Activated naive CD4-positive, alpha-beta T cell treated with anti-CD3 and anti-CD28 coated beads for 36 hours (primary cell): ENCODE measurements at regions of chr4 and their contacts with region 1.

Region 1: GRCh38 chr4:122508083-122508482 is 51.6 kb upstream of the IL2 start:
- DNase-seq: no peak
- H3K4me3 Mint-ChIP-seq: peak overlapping the region; percentile 53
- H3K27ac Mint-ChIP-seq: peak overlapping the region; percentile 98
- H3K4me1 Mint-ChIP-seq: peaks cover 89% of the 10 kb centered on the region
- H3K27me3 Mint-ChIP-seq: no peaks in the 10 kb centered on the region

Region 2: GRCh38 chr4:122252584-122252983 is 255.5 kb before region 1 on chr4:
- CTCF ChIA-PET with region 1: no interaction called
- intact Hi-C with region 1: no loop called
- DNase-seq: no peak
- H3K4me3 Mint-ChIP-seq: no peak overlapping the region
- H3K27ac Mint-ChIP-seq: no peak overlapping the region
- H3K4me1 Mint-ChIP-seq: no peaks in the 10 kb centered on the region
- H3K27me3 Mint-ChIP-seq: no peaks in the 10 kb centered on the region

Region 3: DNA sequence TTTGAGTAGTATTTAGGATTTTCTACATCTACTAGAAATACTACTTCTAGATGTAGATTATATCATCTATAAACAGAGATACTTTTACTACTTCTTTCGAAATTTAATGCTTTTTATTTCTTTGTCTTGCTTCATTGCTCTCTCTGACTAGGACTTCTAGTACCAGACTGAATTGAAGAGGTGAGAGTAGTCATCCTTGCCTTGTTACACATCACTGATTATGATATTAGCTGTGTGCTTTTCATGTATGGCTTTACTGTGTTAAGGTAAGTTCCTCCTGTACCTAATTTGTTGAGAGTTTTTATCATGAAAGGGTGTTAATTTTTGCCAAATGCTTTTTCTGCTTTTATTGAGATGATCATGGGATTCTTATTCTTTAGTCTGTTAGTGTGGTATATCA is 32.0 kb before region 1 on chr4:
- CTCF ChIA-PET with region 1: no interaction called
- intact Hi-C with region 1: loop called (anchors 2 kb)
- DNase-seq: no peak
- H3K4me3 Mint-ChIP-seq: no peak overlapping the region
- H3K27ac Mint-ChIP-seq: peak overlapping the region; percentile 73
- H3K4me1 Mint-ChIP-seq: peaks cover 27% of the 10 kb centered on the region
- H3K27me3 Mint-ChIP-seq: no peaks in the 10 kb centered on the region

Region 4: GRCh38 chr4:122542411-122543236 is 34.5 kb after region 1 on chr4:
- CTCF ChIA-PET with region 1: interaction called, 4 read pairs
- intact Hi-C with region 1: loop called (anchors 1 kb)
- DNase-seq: no peak
- H3K4me3 Mint-ChIP-seq: peak overlapping the region; percentile 52
- H3K27ac Mint-ChIP-seq: peak overlapping the region; percentile 100
- H3K4me1 Mint-ChIP-seq: peaks cover 94% of the 10 kb centered on the region
- H3K27me3 Mint-ChIP-seq: no peaks in the 10 kb centered on the region

Region 5: GRCh38 chr4:122548452-122548851 is 40.4 kb after region 1 on chr4:
- CTCF ChIA-PET with region 1: interaction called, 3 read pairs
- intact Hi-C with region 1: loop called (anchors 1 kb)
- DNase-seq: peak; percentile 64
- H3K4me3 Mint-ChIP-seq: peak overlapping the region; percentile 77
- H3K27ac Mint-ChIP-seq: peak overlapping the region; percentile 96
- H3K4me1 Mint-ChIP-seq: peaks cover 93% of the 10 kb centered on the region
- H3K27me3 Mint-ChIP-seq: no peaks in the 10 kb centered on the region

Region 6: GRCh38 chr4:123649645-123650391 is 1141.7 kb after region 1 on chr4:
- CTCF ChIA-PET with region 1: no interaction called
- intact Hi-C with region 1: no loop called
- DNase-seq: no peak
- H3K4me3 Mint-ChIP-seq: no peak overlapping the region
- H3K27ac Mint-ChIP-seq: no peak overlapping the region
- H3K4me1 Mint-ChIP-seq: no peaks in the 10 kb centered on the region
- H3K27me3 Mint-ChIP-seq: peaks cover 6% of the 10 kb centered on the region